Activated T-helper 2 cell treated with anti-CD3 and anti-CD28 coated beads, Interferon-gamma antibody, Interleukin-2, Interleukin-4, amounts not matched to agents 10 μg/mL and 5 μg/mL and 100 μg/mL, durations not matched to agents 14 hours and 24 hours and 36 hours (primary cell): ENCODE measurements at regions of chr11 and their contacts with region 1.

Region 1: GRCh38 chr11:67353317-67354074 is at the start of gene POLD4:
- DNase-seq: peak; percentile 94
- H3K4me3 Mint-ChIP-seq: peak within 1 kb of the TSS; percentile 96
- H3K27ac Mint-ChIP-seq: peak within 1 kb of the TSS; percentile 100
- H3K4me1 Mint-ChIP-seq: peaks cover 35% of the 10 kb centered on the region
- H3K27me3 Mint-ChIP-seq: peaks cover 8% of the 10 kb centered on the region
- total RNA-seq, gene POLD4: 41.1 and 50.1 TPM in 2 replicates

Region 2: GRCh38 chr11:66480117-66480938 is 873.2 kb before region 1 on chr11 and contains the start of gene DPP3:
- intact Hi-C with region 1: no loop called
- DNase-seq: peak; percentile 96
- H3K4me3 Mint-ChIP-seq: peak within 1 kb of the TSS; percentile 85
- H3K27ac Mint-ChIP-seq: peak within 1 kb of the TSS; percentile 84
- H3K4me1 Mint-ChIP-seq: peaks cover 28% of the 10 kb centered on the region
- H3K27me3 Mint-ChIP-seq: no peaks in the 10 kb centered on the region
- total RNA-seq, gene DPP3: 109 and 119 TPM in 2 replicates

Region 3: GRCh38 chr11:67317205-67317887 is 36.1 kb before region 1 on chr11:
- intact Hi-C with region 1: loop called (anchors 5 kb)
- DNase-seq: peak; percentile 98
- H3K4me3 Mint-ChIP-seq: peak overlapping the region; percentile 96
- H3K27ac Mint-ChIP-seq: peak overlapping the region; percentile 98
- H3K4me1 Mint-ChIP-seq: peaks cover 32% of the 10 kb centered on the region
- H3K27me3 Mint-ChIP-seq: peaks cover 3% of the 10 kb centered on the region

Region 4: DNA sequence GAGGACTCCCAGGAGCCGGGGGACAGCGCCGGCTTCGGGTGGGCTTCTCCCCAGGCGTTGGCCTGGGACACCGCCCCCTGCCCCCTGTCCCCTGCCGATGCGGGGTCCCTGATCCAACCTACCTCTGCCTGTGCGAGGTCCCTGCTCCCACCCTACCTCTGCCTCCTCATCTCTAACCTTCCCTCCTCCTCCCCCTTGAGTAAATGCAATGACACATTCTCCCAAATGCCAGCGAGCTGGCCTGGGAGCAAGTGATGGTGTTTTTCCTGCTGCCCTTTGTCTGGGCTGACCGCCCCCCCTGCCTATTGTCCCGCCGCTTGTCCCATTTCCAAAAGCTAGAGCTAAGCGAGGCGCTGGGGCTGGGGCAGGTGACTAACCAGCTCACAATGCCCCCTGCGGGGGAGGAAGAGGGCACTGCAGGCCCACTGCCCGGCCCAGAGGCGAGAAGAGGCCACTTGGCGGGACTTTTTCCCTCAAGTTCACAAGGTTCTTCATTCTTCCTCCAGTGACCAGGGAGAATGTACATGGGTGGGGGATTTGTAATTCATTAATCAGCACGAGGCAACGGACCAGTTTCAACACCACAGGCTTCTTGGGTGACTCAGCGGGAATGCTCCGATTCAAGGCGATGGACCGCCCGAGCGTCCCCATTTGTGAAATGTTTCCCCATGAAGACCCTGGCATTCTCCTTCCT is 20.6 kb after region 1 on chr11:
- intact Hi-C with region 1: loop called (anchors 1 kb)
- DNase-seq: no peak
- H3K4me3 Mint-ChIP-seq: peak overlapping the region; percentile 89
- H3K27ac Mint-ChIP-seq: peak overlapping the region; percentile 85
- H3K4me1 Mint-ChIP-seq: peaks cover 31% of the 10 kb centered on the region
- H3K27me3 Mint-ChIP-seq: peaks cover 54% of the 10 kb centered on the region

Region 5: GRCh38 chr11:67382276-67383136 is 29.0 kb after region 1 on chr11:
- intact Hi-C with region 1: loop called (anchors 1 kb)
- DNase-seq: peak; percentile 73
- H3K4me3 Mint-ChIP-seq: no peak overlapping the region
- H3K27ac Mint-ChIP-seq: no peak overlapping the region
- H3K4me1 Mint-ChIP-seq: peaks cover 5% of the 10 kb centered on the region
- H3K27me3 Mint-ChIP-seq: peaks cover 17% of the 10 kb centered on the region

Region 6: DNA sequence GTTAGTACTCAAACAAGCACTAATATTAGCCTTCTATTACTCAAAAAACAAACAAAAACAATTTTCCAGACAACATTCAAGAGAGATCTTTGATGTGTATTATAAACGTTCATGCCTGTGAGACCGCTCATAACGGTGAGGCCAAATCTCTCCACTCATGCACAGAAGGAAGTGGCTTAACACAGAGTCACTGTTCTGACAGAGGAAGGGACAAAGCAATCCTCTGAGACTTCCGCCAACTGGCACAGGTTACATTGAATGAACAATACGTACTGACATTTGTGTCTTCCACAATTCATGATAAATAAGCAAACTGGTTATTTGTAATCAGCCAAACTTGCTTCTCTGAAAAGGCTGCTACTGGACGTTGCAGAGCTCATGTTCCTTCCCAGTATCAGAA is 737.2 kb after region 1 on chr11:
- intact Hi-C with region 1: no loop called
- DNase-seq: no peak
- H3K4me3 Mint-ChIP-seq: no peak overlapping the region
- H3K27ac Mint-ChIP-seq: no peak overlapping the region
- H3K4me1 Mint-ChIP-seq: peaks cover 6% of the 10 kb centered on the region
- H3K27me3 Mint-ChIP-seq: no peaks in the 10 kb centered on the region